ENCODE measurements at regions of chr9 and their contacts with region 1.

Region 1: DNA sequence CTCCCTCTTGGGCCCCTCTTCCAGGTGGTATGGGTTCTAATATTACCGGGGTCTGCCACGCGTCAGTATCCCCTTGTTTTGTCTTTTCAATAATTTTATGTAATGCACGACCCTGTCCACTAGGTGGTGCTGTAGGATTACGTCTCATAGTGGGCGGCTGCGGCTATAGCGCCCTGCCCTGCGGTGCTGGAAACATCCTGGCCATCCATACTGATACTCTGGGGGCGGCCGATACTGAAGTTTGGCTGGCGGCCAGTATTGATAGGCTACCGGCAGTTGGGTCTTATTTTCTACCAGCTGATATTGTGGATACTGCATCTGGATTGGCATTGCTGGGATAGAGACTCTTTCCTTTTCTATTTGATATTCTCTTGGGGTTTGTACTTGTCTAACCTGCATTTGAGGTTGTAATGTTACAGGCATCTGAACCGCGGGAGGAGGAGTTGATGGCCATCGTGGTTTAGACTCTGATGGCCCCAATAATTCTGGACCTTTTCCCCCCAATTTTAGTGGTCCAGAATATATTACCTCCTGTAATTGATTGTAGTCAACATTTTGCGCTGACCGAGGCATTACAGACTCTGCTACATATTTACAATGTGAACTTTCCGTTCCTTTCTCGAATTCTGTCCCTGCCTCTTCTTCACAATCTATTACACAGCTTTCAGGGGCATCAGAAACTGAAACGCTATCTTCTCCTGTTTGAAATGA is 3.3 kb upstream of the TMEM141 start:
- DNase-seq: peak; percentile 42
- ATAC-seq: no peak
- H3K4me3 ChIP-seq: no peak overlapping the region
- H3K27ac ChIP-seq: no peak overlapping the region
- H3K4me1 ChIP-seq: peaks cover 5% of the 10 kb centered on the region; the same call in 1 of the 2 replicates
- H3K27me3 ChIP-seq: peaks cover 5% of the 10 kb centered on the region; the same call in 1 of the 2 replicates
- CTCF ChIP-seq: peak; percentile 81
- POLR2A ChIP-seq: no peak
- RAD21 ChIP-seq: peak; percentile 88

Region 2: GRCh38 chr9:136599811-136600660 is 187.8 kb before region 1 on chr9:
- CTCF ChIA-PET with region 1: no interaction called
- POLR2A ChIA-PET with region 1: no interaction called
- dilution Hi-C with region 1: no loop called
- in situ Hi-C with region 1: no loop called
- intact Hi-C with region 1: no loop called
- DNase-seq: no peak
- ATAC-seq: no peak
- H3K4me3 ChIP-seq: no peak overlapping the region
- H3K27ac ChIP-seq: no peak overlapping the region
- H3K4me1 ChIP-seq: no peaks in the 10 kb centered on the region
- H3K27me3 ChIP-seq: peaks cover 6% of the 10 kb centered on the region; the same call in 1 of the 2 replicates
- CTCF ChIP-seq: no peak
- POLR2A ChIP-seq: no peak
- RAD21 ChIP-seq: no peak

Region 3: GRCh38 chr9:137029058-137029936 is 241.5 kb after region 1 on chr9:
- CTCF ChIA-PET with region 1: interaction called, 3 read pairs
- POLR2A ChIA-PET with region 1: no interaction called
- dilution Hi-C with region 1: no loop called
- in situ Hi-C with region 1: loop called (anchors 10 kb)
- intact Hi-C with region 1: loop called (anchors 1 kb)
- DNase-seq: peak; percentile 36
- ATAC-seq: peak; percentile 69
- H3K4me3 ChIP-seq: no peak overlapping the region; the same call in 1 of the 2 replicates
- H3K27ac ChIP-seq: no peak overlapping the region
- H3K4me1 ChIP-seq: peaks cover 5% of the 10 kb centered on the region
- H3K27me3 ChIP-seq: peaks cover 2% of the 10 kb centered on the region; the same call in 1 of the 2 replicates
- CTCF ChIP-seq: peak; percentile 74
- POLR2A ChIP-seq: no peak
- RAD21 ChIP-seq: peak; percentile 41; the same call in 1 of the 2 replicates

Region 4: DNA sequence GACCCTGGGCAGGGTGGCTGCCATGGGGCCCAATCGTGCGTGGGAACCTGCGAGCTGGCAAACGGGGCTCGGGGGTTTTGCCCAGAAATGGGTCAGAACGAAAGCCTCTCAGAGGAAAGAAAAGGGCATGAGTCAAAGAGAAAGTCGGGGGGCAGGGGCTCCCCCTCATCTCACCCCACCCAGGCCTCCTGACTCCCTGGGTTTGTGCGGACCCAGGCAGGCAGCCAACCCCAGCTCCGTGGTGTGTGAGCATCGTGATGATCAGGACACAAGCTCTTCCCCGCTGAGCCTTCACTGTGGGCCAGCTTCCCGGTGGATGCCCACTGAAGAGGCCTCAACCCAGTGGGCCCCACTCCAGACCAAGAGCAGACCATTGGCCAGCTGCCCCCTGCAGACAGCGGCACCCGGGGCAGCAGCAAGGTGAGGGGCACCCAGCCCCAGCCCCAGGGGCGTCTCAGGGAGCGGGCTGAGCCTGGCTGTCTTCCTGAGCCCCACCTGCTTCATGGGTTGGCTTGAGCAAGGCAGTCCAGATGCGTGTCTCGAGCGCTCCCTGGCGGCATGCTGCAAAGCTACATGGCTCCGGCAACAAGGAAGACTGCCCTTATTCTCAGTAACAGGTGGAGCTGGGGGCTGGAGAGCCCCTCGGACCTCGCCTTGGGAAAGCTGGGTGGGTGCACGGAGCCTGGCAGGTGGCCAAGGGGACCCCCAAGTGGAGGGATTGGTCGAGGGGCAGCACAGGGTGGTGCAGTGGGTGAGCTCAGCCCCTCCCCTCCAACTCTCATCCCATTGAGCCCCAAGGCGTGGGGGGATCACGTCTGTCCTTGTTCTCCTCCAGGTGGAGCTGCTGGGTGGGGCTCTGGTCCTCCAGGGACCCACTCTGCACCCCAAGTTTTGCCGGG is 247.3 kb after region 1 on chr9:
- CTCF ChIA-PET with region 1: interaction called, 4 read pairs
- POLR2A ChIA-PET with region 1: no interaction called
- dilution Hi-C with region 1: no loop called
- in situ Hi-C with region 1: loop called (anchors 10 kb)
- intact Hi-C with region 1: loop called (anchors 1 kb)
- DNase-seq: peak; percentile 77
- ATAC-seq: peak; percentile 97
- H3K4me3 ChIP-seq: no peak overlapping the region
- H3K27ac ChIP-seq: no peak overlapping the region
- H3K4me1 ChIP-seq: no peaks in the 10 kb centered on the region
- H3K27me3 ChIP-seq: peaks cover 2% of the 10 kb centered on the region; the same call in 1 of the 2 replicates
- CTCF ChIP-seq: peak; percentile 88
- POLR2A ChIP-seq: no peak
- RAD21 ChIP-seq: peak; percentile 87

Region 5: GRCh38 chr9:137086531-137087408 is 298.9 kb after region 1 on chr9 and contains the start of gene MAN1B1:
- CTCF ChIA-PET with region 1: no interaction called
- POLR2A ChIA-PET with region 1: no interaction called
- dilution Hi-C with region 1: no loop called
- in situ Hi-C with region 1: no loop called
- intact Hi-C with region 1: no loop called
- DNase-seq: peak; percentile 98
- ATAC-seq: peak; percentile 83
- H3K4me3 ChIP-seq: peak within 1 kb of the TSS; percentile 61
- H3K27ac ChIP-seq: peak within 1 kb of the TSS; percentile 62
- H3K4me1 ChIP-seq: peaks cover 15% of the 10 kb centered on the region
- H3K27me3 ChIP-seq: no peaks in the 10 kb centered on the region
- CTCF ChIP-seq: no peak
- POLR2A ChIP-seq: peak; percentile 58
- RAD21 ChIP-seq: 0 out of 2 replicates have a peak, but pooled peaks have one; percentile 6
- total RNA-seq, gene MAN1B1: 25.0 and 28.7 TPM in 2 replicates

Measured in IMR-90 (cell line).